Caco-2 (cell line): ENCODE measurements at regions of chr20 and their contacts with region 1.

Region 1: DNA sequence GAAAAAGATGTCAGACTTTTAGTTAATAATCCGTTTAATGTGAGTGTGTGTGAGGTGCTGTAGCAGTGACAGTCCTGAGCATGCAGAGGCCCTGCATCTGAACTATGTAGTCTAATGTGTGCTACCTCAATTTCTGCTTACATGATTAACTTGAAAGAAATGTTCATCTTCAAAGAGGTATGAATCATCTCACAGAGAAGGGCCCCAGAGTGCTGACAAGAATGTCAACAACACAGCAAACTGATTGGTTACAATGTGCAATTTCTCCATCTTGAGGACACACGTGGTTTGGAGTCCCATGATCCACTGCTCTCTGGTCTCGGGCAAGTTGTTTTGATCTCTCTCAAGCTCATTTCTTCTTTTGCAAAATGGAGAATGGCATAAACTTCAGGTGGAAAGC is 61.7 kb upstream of the EMILIN3 start:
- DNase-seq: peak; percentile 72 to 73
- H3K4me3 ChIP-seq: no peak overlapping the region
- H3K4me3 Mint-ChIP-seq: peak overlapping the region; percentile 25
- H3K27ac Mint-ChIP-seq: peak overlapping the region; percentile 36
- H3K4me1 ChIP-seq: peaks cover 30% of the 10 kb centered on the region
- H3K4me1 Mint-ChIP-seq: peaks cover 26% of the 10 kb centered on the region
- H3K27me3 ChIP-seq: no peaks in the 10 kb centered on the region
- H3K27me3 Mint-ChIP-seq: no peaks in the 10 kb centered on the region
- CTCF ChIP-seq: no peak

Region 2: GRCh38 chr20:41095110-41095969 is 332.9 kb before region 1 on chr20:
- CTCF ChIA-PET with region 1: no interaction called
- POLR2A ChIA-PET with region 1: no interaction called
- intact Hi-C with region 1: no loop called
- DNase-seq: peak; percentile 66 to 75
- H3K4me3 ChIP-seq: no peak overlapping the region
- H3K4me3 Mint-ChIP-seq: no peak overlapping the region
- H3K27ac Mint-ChIP-seq: no peak overlapping the region
- H3K4me1 ChIP-seq: no peaks in the 10 kb centered on the region
- H3K4me1 Mint-ChIP-seq: no peaks in the 10 kb centered on the region
- H3K27me3 ChIP-seq: no peaks in the 10 kb centered on the region
- H3K27me3 Mint-ChIP-seq: no peaks in the 10 kb centered on the region
- CTCF ChIP-seq: peak; percentile 98 to 99

Region 3: DNA sequence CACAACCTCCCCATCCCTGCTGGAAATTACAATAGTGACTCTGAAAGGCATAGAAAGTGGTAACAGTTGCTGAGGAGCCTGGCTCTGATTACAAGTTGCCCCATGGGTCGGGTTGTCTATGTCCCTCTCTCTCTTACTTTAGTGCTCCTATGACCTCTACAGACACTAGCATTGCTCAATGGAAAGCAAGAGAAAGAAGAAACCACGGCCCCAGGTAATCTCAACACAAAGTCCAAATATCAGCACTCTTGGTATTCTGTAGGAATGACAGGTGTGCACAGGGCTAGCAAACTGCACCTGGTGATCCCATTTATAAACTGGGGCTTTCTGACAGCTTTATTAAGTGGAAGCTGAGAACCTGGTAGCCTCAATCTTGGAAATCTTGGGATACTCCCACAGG is 18.7 kb after region 1 on chr20:
- CTCF ChIA-PET with region 1: no interaction called
- POLR2A ChIA-PET with region 1: no interaction called
- intact Hi-C with region 1: loop called (anchors 1 kb)
- DNase-seq: peak; percentile 63 to 68
- H3K4me3 ChIP-seq: no peak overlapping the region
- H3K4me3 Mint-ChIP-seq: no peak overlapping the region
- H3K27ac Mint-ChIP-seq: no peak overlapping the region
- H3K4me1 ChIP-seq: peaks cover 13% of the 10 kb centered on the region
- H3K4me1 Mint-ChIP-seq: peaks cover 8% of the 10 kb centered on the region
- H3K27me3 ChIP-seq: no peaks in the 10 kb centered on the region
- H3K27me3 Mint-ChIP-seq: no peaks in the 10 kb centered on the region
- CTCF ChIP-seq: no peak

Region 4: GRCh38 chr20:41476013-41476752 is 47.9 kb after region 1 on chr20:
- CTCF ChIA-PET with region 1: no interaction called
- POLR2A ChIA-PET with region 1: no interaction called
- intact Hi-C with region 1: no loop called
- DNase-seq: no peak
- H3K4me3 ChIP-seq: no peak overlapping the region
- H3K4me3 Mint-ChIP-seq: no peak overlapping the region
- H3K27ac Mint-ChIP-seq: no peak overlapping the region
- H3K4me1 ChIP-seq: no peaks in the 10 kb centered on the region
- H3K4me1 Mint-ChIP-seq: no peaks in the 10 kb centered on the region
- H3K27me3 ChIP-seq: no peaks in the 10 kb centered on the region
- H3K27me3 Mint-ChIP-seq: no peaks in the 10 kb centered on the region
- CTCF ChIP-seq: no peak

Region 5: GRCh38 chr20:41717483-41717882 is 289.2 kb after region 1 on chr20:
- CTCF ChIA-PET with region 1: no interaction called
- POLR2A ChIA-PET with region 1: no interaction called
- intact Hi-C with region 1: no loop called
- DNase-seq: no peak
- H3K4me3 ChIP-seq: no peak overlapping the region
- H3K4me3 Mint-ChIP-seq: no peak overlapping the region
- H3K27ac Mint-ChIP-seq: no peak overlapping the region
- H3K4me1 ChIP-seq: peaks cover 6% of the 10 kb centered on the region; the same call in 1 of the 2 replicates
- H3K4me1 Mint-ChIP-seq: peaks cover 5% of the 10 kb centered on the region
- H3K27me3 ChIP-seq: no peaks in the 10 kb centered on the region
- H3K27me3 Mint-ChIP-seq: peaks cover 19% of the 10 kb centered on the region
- CTCF ChIP-seq: no peak